Gastrocnemius medialis (tissue), 4 donors: ENCODE measurements at regions of chr11 and their contacts with region 1.

Region 1: GRCh38 chr11:74398244-74399159 is at the start of gene PGM2L1:
- DNase-seq: peak; percentile 91 to 93
- ATAC-seq: peak; percentile 97
- H3K4me3 ChIP-seq: peak within 1 kb of the TSS; percentile 88 to 99 (median 92)
- H3K27ac ChIP-seq: peak within 1 kb of the TSS; percentile 89 to 99 (median 94)
- H3K4me1 ChIP-seq: peaks cover 7% of the 10 kb centered on the region in 2 donors
- H3K27me3 ChIP-seq: no peaks in the 10 kb centered on the region
- CTCF ChIP-seq: no peak
- POLR2A ChIP-seq: peak; percentile 64 to 87
- total RNA-seq, gene PGM2L1: 3.7 to 9.7 (median 7.9) TPM

Region 2: DNA sequence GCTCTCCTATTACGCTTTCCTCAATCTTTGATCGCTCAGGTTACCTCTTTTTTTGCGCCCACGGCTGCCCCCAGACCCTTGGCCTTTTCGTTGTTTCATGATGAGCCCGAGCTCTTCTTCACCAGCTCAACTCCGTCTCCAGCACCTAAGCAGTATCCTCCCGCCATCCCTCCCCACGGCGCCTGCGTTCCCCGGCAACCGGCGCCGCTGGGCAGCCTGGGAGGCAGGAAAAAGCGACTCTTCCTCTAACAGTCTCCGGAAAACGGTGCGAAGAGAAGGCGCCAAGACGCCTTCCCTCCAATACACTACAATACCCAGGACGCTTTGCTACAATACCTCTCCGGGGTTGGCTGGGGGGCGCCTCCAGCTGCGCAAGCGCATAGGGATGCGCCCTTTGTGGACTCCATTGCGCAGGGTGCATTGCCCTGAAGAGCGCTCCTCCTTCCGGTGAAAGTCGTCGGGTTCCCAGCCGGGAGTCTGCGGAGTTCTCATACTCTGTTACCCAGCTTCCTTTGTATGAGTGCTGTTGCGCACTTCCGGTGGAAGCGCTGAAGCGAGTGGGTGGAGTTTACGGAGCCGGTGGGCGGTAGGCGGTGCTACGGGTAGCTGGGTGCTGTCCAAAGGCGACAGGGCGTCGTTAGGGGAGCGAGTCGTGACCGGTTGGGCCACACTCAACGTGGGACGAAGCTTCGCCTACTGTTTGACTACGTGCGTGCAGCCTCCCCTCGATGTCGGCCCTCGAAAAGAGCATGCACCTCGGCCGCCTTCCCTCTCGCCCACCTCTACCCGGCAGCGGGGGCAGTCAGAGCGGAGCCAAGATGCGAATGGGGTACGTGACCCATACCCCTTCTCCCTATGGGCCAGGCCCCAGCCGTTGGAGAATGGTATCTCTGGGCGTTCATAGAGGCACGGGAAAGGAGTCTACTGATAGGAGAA is 227.5 kb before region 1 on chr11 and contains the starts of genes C2CD3 and PPME1:
- in situ Hi-C with region 1: no loop called
- intact Hi-C with region 1: loop called (anchors 1 kb)
- DNase-seq: peak; percentile 97 to 99
- ATAC-seq: peak; percentile 96
- H3K4me3 ChIP-seq: peak within 1 kb of the TSS; percentile 66 to 93 (median 90)
- H3K27ac ChIP-seq: peak within 1 kb of the TSS; percentile 94 to 98 (median 96)
- H3K4me1 ChIP-seq: peaks cover 38 to 50% of the 10 kb centered on the region in 2 donors
- H3K27me3 ChIP-seq: no peaks in the 10 kb centered on the region
- CTCF ChIP-seq: peak in 3 of 5 experiments; percentile 14 to 40 (median 37)
- POLR2A ChIP-seq: peak; percentile 87 to 88
- total RNA-seq, gene C2CD3: 13.8 to 33.2 (median 16.4) TPM
- total RNA-seq, gene PPME1: 31.5 to 51.7 (median 43.2) TPM

Region 3: DNA sequence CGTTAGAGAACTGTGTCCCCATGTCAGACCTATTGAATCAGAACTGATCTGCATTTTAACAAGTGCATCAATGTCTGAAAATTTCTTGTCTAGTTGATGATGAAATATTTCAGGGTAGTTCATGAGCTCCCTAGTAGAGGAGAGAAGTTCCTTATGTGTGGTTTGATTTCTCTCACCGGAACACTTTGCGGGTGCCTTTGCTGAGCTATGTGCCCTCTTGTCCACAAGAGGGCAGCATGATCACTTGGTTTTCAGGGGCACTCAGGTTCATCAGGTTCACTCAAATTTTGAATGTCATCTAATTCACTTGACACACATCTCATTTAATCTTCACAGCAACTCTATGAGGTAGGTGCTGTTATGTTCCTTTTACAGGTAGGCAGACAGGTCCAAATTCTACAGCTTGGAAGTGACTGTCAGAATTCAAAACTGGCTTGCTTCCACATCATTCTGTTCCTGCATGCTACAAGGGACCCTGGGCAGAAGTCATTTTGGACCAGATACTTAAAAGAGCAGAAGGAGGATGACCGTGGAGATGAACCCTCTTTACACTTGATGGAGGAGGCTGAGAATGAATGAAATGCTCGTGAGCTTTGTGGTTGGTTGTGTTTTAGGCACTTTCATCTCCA is 142.6 kb before region 1 on chr11:
- in situ Hi-C with region 1: no loop called
- intact Hi-C with region 1: loop called (anchors 5 kb)
- DNase-seq: peak in 1 of 2 donors; percentile 36
- ATAC-seq: peak; percentile 72 to 74
- H3K4me3 ChIP-seq: no peak overlapping the region
- H3K27ac ChIP-seq: no peak overlapping the region
- H3K4me1 ChIP-seq: peaks cover 17 to 29% of the 10 kb centered on the region in 2 donors
- H3K27me3 ChIP-seq: no peaks in the 10 kb centered on the region
- CTCF ChIP-seq: peak; percentile 71 to 90 (median 86)
- POLR2A ChIP-seq: no peak

Region 4: GRCh38 chr11:74288161-74288560 is 110.3 kb before region 1 on chr11:
- in situ Hi-C with region 1: no loop called
- intact Hi-C with region 1: no loop called
- DNase-seq: no peak
- ATAC-seq: no peak
- H3K4me3 ChIP-seq: no peak overlapping the region
- H3K27ac ChIP-seq: no peak overlapping the region
- H3K4me1 ChIP-seq: no peaks in the 10 kb centered on the region
- H3K27me3 ChIP-seq: no peaks in the 10 kb centered on the region
- CTCF ChIP-seq: no peak
- POLR2A ChIP-seq: no peak

Region 5: GRCh38 chr11:74321487-74322188 is 76.9 kb before region 1 on chr11:
- in situ Hi-C with region 1: no loop called
- intact Hi-C with region 1: loop called (anchors 5 kb)
- DNase-seq: no peak
- ATAC-seq: no peak
- H3K4me3 ChIP-seq: no peak overlapping the region
- H3K27ac ChIP-seq: peak overlapping the region in 3 of 4 donors; percentile 68 to 79 (median 78)
- H3K4me1 ChIP-seq: peaks cover 31 to 49% of the 10 kb centered on the region in 2 donors
- H3K27me3 ChIP-seq: no peaks in the 10 kb centered on the region
- CTCF ChIP-seq: peak in 4 of 5 experiments; percentile 18 to 57 (median 44)
- POLR2A ChIP-seq: no peak

Region 6: GRCh38 chr11:74443071-74443864 is 44.8 kb after region 1 on chr11:
- in situ Hi-C with region 1: loop called in 2 of 4 experiments (anchors 5 to 10 kb)
- intact Hi-C with region 1: loop called (anchors 2 kb)
- DNase-seq: peak in 1 of 2 donors; percentile 51
- ATAC-seq: peak; percentile 23 to 58
- H3K4me3 ChIP-seq: peak overlapping the region in 1 of 4 donors; percentile 23
- H3K27ac ChIP-seq: peak overlapping the region; percentile 76 to 85 (median 82)
- H3K4me1 ChIP-seq: peaks cover 27 to 31% of the 10 kb centered on the region in 2 donors
- H3K27me3 ChIP-seq: no peaks in the 10 kb centered on the region
- CTCF ChIP-seq: peak in 3 of 5 experiments; percentile 10 to 30 (median 25)
- POLR2A ChIP-seq: no peak

Region 7: DNA sequence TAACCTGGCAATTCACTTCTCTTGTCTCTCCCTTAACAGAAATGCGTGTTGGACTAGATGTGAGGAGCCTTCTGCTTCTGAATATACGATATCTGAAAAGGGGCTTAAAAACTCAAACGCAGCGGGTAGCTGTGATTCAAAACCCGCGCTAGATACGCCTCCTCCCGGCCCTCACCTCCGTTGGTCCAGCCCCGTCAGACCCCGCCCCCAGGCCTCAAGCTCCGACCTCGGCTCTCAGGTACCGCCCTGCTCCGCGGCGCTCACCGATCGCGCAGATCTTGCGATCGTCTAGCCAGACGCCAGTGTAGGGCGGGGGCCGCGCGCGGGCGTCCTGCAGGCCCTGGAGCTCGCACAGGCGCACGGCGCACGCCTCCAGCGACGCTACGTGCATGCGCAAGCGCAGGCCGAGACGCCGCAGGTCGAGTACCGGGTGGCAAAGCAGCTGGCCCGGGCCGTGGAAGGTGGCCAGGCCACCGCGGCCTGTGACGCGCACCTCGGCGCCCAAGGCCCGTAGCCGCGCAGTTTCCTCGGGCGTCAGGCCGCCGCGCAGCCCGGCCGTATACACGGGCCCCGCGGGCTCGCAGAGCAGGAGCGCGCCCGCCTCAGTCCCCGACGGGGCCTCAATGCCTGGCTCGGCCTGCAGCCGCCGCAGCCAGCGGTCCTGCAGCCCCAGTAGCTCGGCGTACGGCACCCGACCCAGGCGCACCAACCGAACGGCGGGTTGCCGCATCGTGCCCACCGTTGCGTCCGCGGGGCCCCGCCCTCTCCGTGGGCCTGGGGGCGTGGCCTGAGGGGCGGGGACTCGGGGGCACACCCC is 94.7 kb after region 1 on chr11 and contains the start of gene LIPT2:
- in situ Hi-C with region 1: no loop called
- intact Hi-C with region 1: loop called (anchors 1 kb)
- DNase-seq: peak; percentile 94 to 97
- ATAC-seq: peak; percentile 90 to 92
- H3K4me3 ChIP-seq: peak within 1 kb of the TSS; percentile 66 to 96 (median 78)
- H3K27ac ChIP-seq: peak within 1 kb of the TSS; percentile 86 to 100 (median 96)
- H3K4me1 ChIP-seq: peaks cover 20% of the 10 kb centered on the region in 2 donors
- H3K27me3 ChIP-seq: no peaks in the 10 kb centered on the region
- CTCF ChIP-seq: no peak
- POLR2A ChIP-seq: peak; percentile 76 to 87
- total RNA-seq, gene LIPT2: 3.5 to 11.2 (median 8.3) TPM

Region 8: GRCh38 chr11:74748211-74749127 is 350.0 kb after region 1 on chr11 and contains the start of gene RNF169:
- in situ Hi-C with region 1: no loop called
- intact Hi-C with region 1: loop called (anchors 5 kb)
- DNase-seq: peak; percentile 93 to 94
- ATAC-seq: peak; percentile 99
- H3K4me3 ChIP-seq: peak within 1 kb of the TSS; percentile 65 to 84 (median 72)
- H3K27ac ChIP-seq: peak within 1 kb of the TSS; percentile 82 to 93 (median 87)
- H3K4me1 ChIP-seq: peaks cover 14 to 23% of the 10 kb centered on the region in 2 donors
- H3K27me3 ChIP-seq: no peaks in the 10 kb centered on the region
- CTCF ChIP-seq: no peak
- POLR2A ChIP-seq: peak; percentile 51 to 69
- total RNA-seq, gene RNF169: 17.1 to 25.2 (median 21.0) TPM

Region 9: DNA sequence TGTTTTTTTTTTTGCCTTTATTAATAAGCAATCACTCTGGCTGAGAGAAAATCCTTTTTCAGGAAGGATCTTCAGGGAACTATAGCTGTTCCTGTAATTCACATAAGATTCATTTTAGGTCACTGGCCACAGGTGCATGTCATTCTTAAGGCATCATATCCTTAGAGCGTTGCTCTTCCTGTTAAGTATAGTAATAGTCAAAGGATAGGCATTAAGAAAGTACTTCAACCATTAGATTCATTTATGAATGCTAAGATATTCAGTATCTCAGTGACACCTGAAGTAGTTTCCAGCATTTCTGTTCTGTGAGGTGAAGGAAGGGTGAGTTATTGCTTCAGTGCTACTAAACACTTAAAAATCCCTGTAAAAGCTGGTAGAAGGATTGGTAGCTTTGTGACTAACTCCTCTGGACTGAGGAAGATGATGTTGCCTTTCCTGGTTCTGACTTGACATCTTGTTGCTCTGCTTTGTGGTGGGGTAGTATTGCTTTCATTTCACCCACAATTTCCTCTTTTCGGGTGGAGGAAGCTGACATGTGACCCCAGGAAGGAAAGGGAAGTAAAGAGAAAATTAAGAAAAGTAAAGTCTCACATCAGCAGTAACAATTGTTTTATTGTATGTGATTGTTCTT is 384.9 kb after region 1 on chr11:
- in situ Hi-C with region 1: no loop called
- intact Hi-C with region 1: no loop called
- DNase-seq: no peak
- ATAC-seq: no peak
- H3K4me3 ChIP-seq: no peak overlapping the region
- H3K27ac ChIP-seq: peak overlapping the region in 1 of 4 donors; percentile 34
- H3K4me1 ChIP-seq: peaks cover 34 to 37% of the 10 kb centered on the region in 2 donors
- H3K27me3 ChIP-seq: no peaks in the 10 kb centered on the region
- CTCF ChIP-seq: no peak
- POLR2A ChIP-seq: no peak